A673 (cell line): ENCODE measurements at regions of chr17 and their contacts with region 1.

Region 1: DNA sequence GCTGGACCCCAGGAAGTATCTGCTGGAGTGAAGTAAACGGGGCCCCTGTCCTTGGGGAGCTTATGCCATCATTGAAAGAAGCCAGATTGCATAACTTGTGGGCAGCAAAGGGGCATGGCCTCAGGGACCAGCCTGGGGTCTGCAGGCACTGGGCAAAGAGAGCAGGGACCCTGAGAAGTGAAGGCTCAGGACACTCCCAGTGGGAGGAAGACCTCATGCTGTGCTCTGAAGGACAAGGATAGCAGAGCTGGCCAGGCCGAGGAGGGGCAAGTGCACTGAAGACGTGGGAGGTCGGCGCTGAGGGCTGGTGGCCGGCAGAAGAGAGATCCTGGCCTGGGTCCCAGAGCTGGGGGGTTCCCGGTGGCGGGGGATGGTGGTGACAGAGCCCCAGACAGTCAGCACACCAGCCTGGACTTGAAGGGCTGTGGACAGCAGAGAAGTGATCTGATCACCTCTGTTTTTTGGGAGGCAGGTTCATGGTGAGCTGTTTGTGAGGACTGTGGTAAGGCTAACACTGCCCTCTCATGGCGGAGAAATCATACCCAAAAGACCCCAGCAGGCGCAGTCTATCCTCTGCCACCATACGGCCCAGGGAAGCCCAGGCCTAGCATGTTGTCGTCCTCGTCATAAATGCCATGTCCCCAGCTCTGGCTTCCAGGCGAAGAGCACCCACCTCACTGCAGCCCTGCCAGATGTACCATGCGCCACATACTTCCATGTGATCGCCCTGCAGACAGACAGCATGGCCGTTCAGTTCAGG is 7.1 kb upstream of the CNP start:
- DNase-seq: peak; percentile 27
- H3K4me3 ChIP-seq: no peak overlapping the region
- H3K27ac ChIP-seq: no peak overlapping the region
- H3K4me1 ChIP-seq: no peaks in the 10 kb centered on the region
- H3K27me3 ChIP-seq: no peaks in the 10 kb centered on the region
- CTCF ChIP-seq: 0 out of 2 replicates have a peak, but pooled peaks have one; percentile 31

Region 2: GRCh38 chr17:41972571-41973411 is 13.3 kb after region 1 on chr17:
- CTCF ChIA-PET with region 1: no interaction called
- POLR2A ChIA-PET with region 1: no interaction called
- intact Hi-C with region 1: no loop called
- DNase-seq: no peak
- H3K4me3 ChIP-seq: no peak overlapping the region
- H3K27ac ChIP-seq: no peak overlapping the region
- H3K4me1 ChIP-seq: no peaks in the 10 kb centered on the region
- H3K27me3 ChIP-seq: no peaks in the 10 kb centered on the region
- CTCF ChIP-seq: no peak

Region 3: DNA sequence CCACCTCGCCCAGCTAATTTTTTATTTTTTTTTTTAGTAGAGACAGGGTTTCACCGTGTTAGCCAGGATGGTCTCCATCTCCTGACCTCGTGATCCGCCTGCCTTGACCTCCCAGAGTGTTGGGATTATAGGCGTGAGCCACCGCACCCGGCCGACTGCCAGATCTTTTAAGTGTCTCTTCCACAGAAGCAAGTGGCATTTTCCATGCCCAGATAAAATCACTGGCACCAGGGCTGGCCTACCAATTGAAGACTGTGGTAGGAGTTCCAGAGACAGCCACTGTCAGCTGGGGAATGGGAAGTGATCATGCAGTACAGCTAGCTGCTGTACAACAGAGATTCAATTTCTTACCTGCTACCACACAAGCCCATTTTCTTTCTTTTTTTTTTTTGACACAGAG is 24.9 kb after region 1 on chr17:
- CTCF ChIA-PET with region 1: interaction called, 15 read pairs
- POLR2A ChIA-PET with region 1: no interaction called
- intact Hi-C with region 1: no loop called
- DNase-seq: no peak
- H3K4me3 ChIP-seq: no peak overlapping the region
- H3K27ac ChIP-seq: no peak overlapping the region
- H3K4me1 ChIP-seq: no peaks in the 10 kb centered on the region
- H3K27me3 ChIP-seq: no peaks in the 10 kb centered on the region
- CTCF ChIP-seq: no peak